CD4-positive, alpha-beta memory T cell (primary cell): ENCODE measurements at regions of chr5 and their contacts with region 1.

Region 1: GRCh38 chr5:151213800-151214613 is 9.9 kb downstream of the CCDC69 start:
- DNase-seq: peak; percentile 83 to 92 (median 84)
- H3K4me3 ChIP-seq: peak overlapping the region; percentile 49 to 85
- H3K4me3 Mint-ChIP-seq: peak overlapping the region; percentile 86 to 95 (median 88)
- H3K27ac ChIP-seq: peak overlapping the region; percentile 90
- H3K27ac Mint-ChIP-seq: peak overlapping the region; percentile 86 to 99 (median 95)
- H3K4me1 ChIP-seq: peaks cover 98% of the 10 kb centered on the region
- H3K4me1 Mint-ChIP-seq: peaks cover 66 to 93% (median 76%) of the 10 kb centered on the region in 4 donors
- H3K27me3 ChIP-seq: no peaks in the 10 kb centered on the region
- H3K27me3 Mint-ChIP-seq: no peaks in the 10 kb centered on the region

Region 2: DNA sequence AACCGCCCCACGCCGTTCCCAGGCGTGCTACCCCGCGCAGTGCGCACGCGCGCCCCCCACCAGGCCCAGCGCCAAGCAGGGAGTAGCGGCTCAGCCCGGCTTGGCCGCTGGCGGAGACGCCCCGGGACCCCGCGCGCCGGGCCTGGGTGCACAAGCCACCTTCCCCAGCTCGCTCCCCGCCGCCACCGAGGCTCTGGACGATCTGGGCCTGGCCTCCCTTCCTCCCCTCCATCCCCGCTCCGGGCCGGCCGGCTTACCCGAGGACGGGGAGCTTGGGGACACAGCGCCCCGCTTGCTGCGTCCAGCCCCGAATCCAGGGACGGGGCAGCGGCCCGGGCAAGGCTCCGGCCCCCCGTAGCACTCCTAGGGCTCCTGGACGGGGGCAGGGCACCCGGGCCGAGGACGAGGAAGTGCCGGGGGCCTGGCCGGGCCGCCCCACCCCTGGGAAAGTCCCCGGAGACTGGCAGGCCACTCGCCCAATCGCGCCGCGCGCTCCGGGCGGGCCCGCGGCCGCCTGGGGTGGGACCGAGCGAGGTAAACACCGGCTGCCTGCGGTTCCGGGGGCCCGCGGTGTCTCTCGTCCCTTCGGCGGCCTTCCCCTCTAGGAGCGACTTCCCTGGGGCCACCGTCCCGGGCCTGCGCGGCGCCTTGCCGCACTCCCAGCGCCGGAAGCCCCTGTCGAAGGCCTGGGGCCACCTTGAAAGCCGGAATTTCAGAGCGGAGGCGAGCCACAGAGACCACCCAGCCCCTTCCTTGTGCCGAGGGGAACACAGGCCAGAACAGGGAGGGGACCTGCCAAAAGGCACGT is 133.2 kb before region 1 on chr5 and contains the start of gene TNIP1:
- CTCF ChIA-PET with region 1: no interaction called
- POLR2A ChIA-PET with region 1: interaction called, 26 read pairs
- intact Hi-C with region 1: no loop called
- DNase-seq: peak; percentile 91 to 97 (median 93)
- H3K4me3 ChIP-seq: peak within 1 kb of the TSS; percentile 61 to 87
- H3K4me3 Mint-ChIP-seq: peak within 1 kb of the TSS; percentile 88 to 98 (median 94)
- H3K27ac ChIP-seq: peak within 1 kb of the TSS; percentile 99
- H3K27ac Mint-ChIP-seq: peak within 1 kb of the TSS; percentile 76 to 98 (median 96)
- H3K4me1 ChIP-seq: peaks cover 89% of the 10 kb centered on the region
- H3K4me1 Mint-ChIP-seq: peaks cover 69 to 94% (median 76%) of the 10 kb centered on the region in 4 donors
- H3K27me3 ChIP-seq: no peaks in the 10 kb centered on the region
- H3K27me3 Mint-ChIP-seq: no peaks in the 10 kb centered on the region
- total RNA-seq, gene TNIP1: 227 to 233 TPM

Region 3: GRCh38 chr5:151157426-151158286 is 56.4 kb before region 1 on chr5 and contains the start of gene ANXA6:
- CTCF ChIA-PET with region 1: interaction called, 5 read pairs
- POLR2A ChIA-PET with region 1: interaction called, 12 read pairs
- intact Hi-C with region 1: loop called (anchors 2 kb)
- DNase-seq: peak; percentile 58 to 71 (median 64)
- H3K4me3 ChIP-seq: peak within 1 kb of the TSS; percentile 80 to 90
- H3K4me3 Mint-ChIP-seq: peak within 1 kb of the TSS; percentile 91 to 99 (median 97)
- H3K27ac ChIP-seq: peak within 1 kb of the TSS; percentile 84
- H3K27ac Mint-ChIP-seq: peak within 1 kb of the TSS; percentile 93 to 99 (median 97)
- H3K4me1 ChIP-seq: peaks cover 55% of the 10 kb centered on the region
- H3K4me1 Mint-ChIP-seq: peaks cover 37 to 73% (median 51%) of the 10 kb centered on the region in 4 donors
- H3K27me3 ChIP-seq: no peaks in the 10 kb centered on the region
- H3K27me3 Mint-ChIP-seq: no peaks in the 10 kb centered on the region
- total RNA-seq, gene ANXA6: 318 to 342 TPM

Region 4: GRCh38 chr5:151202381-151203139 is 11.4 kb before region 1 on chr5:
- CTCF ChIA-PET with region 1: interaction called, 9 read pairs
- POLR2A ChIA-PET with region 1: interaction called, 67 read pairs
- intact Hi-C with region 1: loop called (anchors 2 kb)
- DNase-seq: peak in 1 of 5 donors; percentile 74
- H3K4me3 ChIP-seq: no peak overlapping the region
- H3K4me3 Mint-ChIP-seq: peak overlapping the region in 7 of 8 donors; percentile 28 to 76 (median 55)
- H3K27ac ChIP-seq: peak overlapping the region; percentile 25
- H3K27ac Mint-ChIP-seq: peak overlapping the region; percentile 85 to 93 (median 90)
- H3K4me1 ChIP-seq: peaks cover 32% of the 10 kb centered on the region
- H3K4me1 Mint-ChIP-seq: peaks cover 25 to 46% (median 33%) of the 10 kb centered on the region in 4 donors
- H3K27me3 ChIP-seq: no peaks in the 10 kb centered on the region
- H3K27me3 Mint-ChIP-seq: no peaks in the 10 kb centered on the region

Region 5: GRCh38 chr5:151239237-151239861 is 25.3 kb after region 1 on chr5:
- CTCF ChIA-PET with region 1: interaction called, 149 read pairs
- POLR2A ChIA-PET with region 1: interaction called, 16 read pairs
- intact Hi-C with region 1: no loop called
- DNase-seq: peak in 4 of 5 donors; percentile 40 to 60 (median 48)
- H3K4me3 ChIP-seq: no peak overlapping the region
- H3K4me3 Mint-ChIP-seq: no peak overlapping the region
- H3K27ac ChIP-seq: no peak overlapping the region
- H3K27ac Mint-ChIP-seq: peak overlapping the region in 3 of 7 donors; percentile 35 to 81 (median 61)
- H3K4me1 ChIP-seq: peaks cover 28% of the 10 kb centered on the region
- H3K4me1 Mint-ChIP-seq: peaks cover 17 to 24% (median 18%) of the 10 kb centered on the region in 4 donors
- H3K27me3 ChIP-seq: no peaks in the 10 kb centered on the region
- H3K27me3 Mint-ChIP-seq: no peaks in the 10 kb centered on the region

Region 6: GRCh38 chr5:152221721-152222629 is 1008.0 kb after region 1 on chr5:
- CTCF ChIA-PET with region 1: no interaction called
- POLR2A ChIA-PET with region 1: no interaction called
- intact Hi-C with region 1: no loop called
- DNase-seq: no peak
- H3K4me3 ChIP-seq: no peak overlapping the region
- H3K4me3 Mint-ChIP-seq: no peak overlapping the region
- H3K27ac ChIP-seq: no peak overlapping the region
- H3K27ac Mint-ChIP-seq: no peak overlapping the region
- H3K4me1 ChIP-seq: no peaks in the 10 kb centered on the region
- H3K4me1 Mint-ChIP-seq: peaks cover 4 to 6% (median 5%) of the 10 kb centered on the region in 4 donors
- H3K27me3 ChIP-seq: no peaks in the 10 kb centered on the region
- H3K27me3 Mint-ChIP-seq: peaks cover 0 to 3% of the 10 kb centered on the region in 2 donors